Activated naive CD4-positive, alpha-beta T cell treated with anti-CD3 and anti-CD28 coated beads for 36 hours (primary cell): ENCODE measurements at regions of chr11 and their contacts with region 1.

Region 1: GRCh38 chr11:20609727-20610707 is 10.6 kb downstream of the SLC6A5 start:
- DNase-seq: peak; percentile 77
- H3K4me3 Mint-ChIP-seq: peak overlapping the region; percentile 28
- H3K27ac Mint-ChIP-seq: no peak overlapping the region
- H3K4me1 Mint-ChIP-seq: peaks cover 7% of the 10 kb centered on the region
- H3K27me3 Mint-ChIP-seq: peaks cover 72% of the 10 kb centered on the region

Region 2: DNA sequence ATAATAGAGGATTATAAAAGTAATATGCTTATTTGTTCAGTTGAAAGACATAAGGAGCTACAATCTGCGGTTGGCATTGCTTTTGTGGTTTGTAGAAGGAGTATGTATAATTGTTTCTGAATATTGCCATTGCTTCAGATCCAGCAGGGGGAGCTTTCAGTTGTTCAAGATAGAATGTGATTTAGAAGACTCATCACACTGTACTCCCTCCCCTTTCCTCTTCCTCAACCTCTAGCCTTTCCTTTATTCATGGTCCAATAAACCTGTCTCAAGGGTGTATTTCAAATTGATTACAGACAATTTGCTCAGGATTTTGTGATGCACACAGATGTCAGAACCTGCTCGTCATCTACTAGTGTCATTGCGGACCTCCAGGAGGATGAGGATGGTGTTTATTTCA is 212.7 kb before region 1 on chr11:
- CTCF ChIA-PET with region 1: interaction called, 4 read pairs
- intact Hi-C with region 1: loop called (anchors 1 kb)
- DNase-seq: peak; percentile 23
- H3K4me3 Mint-ChIP-seq: no peak overlapping the region
- H3K27ac Mint-ChIP-seq: no peak overlapping the region
- H3K4me1 Mint-ChIP-seq: peaks cover 10% of the 10 kb centered on the region
- H3K27me3 Mint-ChIP-seq: no peaks in the 10 kb centered on the region

Region 3: GRCh38 chr11:20634044-20634443 is 24.0 kb after region 1 on chr11:
- CTCF ChIA-PET with region 1: no interaction called
- intact Hi-C with region 1: no loop called
- DNase-seq: no peak
- H3K4me3 Mint-ChIP-seq: no peak overlapping the region
- H3K27ac Mint-ChIP-seq: no peak overlapping the region
- H3K4me1 Mint-ChIP-seq: no peaks in the 10 kb centered on the region
- H3K27me3 Mint-ChIP-seq: peaks cover 6% of the 10 kb centered on the region